ENCODE measurements at regions of chr22 and their contacts with region 1.

Region 1: DNA sequence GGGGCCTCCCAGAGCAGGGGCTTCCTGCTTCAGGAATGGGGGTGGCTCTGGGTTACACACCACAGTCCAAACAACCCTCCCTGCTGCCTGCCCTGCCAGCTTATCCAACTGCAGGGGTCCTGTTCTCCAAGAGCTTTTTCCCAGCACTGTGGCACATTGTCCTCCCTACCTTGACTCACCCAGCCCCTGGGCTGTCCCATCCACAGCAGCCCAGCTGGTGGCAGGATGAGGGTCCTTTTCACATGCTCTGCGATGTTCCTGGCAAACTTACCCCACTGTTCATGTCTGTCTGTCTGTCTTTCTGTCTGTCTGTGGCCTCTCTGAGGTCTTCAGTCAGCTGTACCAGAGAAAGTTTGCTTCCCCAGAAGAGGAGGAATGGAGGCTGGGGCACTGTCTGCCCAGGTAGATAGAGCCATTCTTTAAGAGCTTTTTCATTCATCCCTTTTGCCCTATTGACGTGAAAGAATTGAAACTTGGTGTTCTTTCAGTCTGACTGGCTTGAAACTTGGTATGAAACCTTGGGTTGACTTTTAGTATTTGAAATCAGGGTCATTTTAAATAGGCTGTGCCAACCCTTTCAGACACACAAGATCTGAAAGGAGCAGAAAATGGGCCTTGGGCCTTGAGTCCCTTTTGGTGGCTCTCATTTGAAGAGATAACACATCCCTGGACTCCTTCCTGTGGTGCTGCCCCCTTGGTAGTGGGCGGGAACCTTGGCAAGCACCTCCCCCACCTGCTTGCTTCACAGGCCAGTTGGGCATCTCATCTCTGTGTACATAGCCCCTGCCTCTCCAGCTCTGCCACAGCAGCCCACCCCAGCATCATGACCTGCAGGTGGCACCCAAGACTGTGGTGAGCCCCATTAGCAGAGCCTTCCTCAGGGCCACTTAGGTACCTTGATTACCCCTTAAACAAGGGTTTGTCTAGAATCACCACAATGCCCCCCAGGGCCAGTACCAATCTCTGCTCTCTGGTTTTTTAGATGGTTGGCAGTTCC is 74.6 kb upstream of the SUSD2 start:
- DNase-seq: no peak
- H3K4me3 ChIP-seq: no peak overlapping the region
- H3K27ac ChIP-seq: no peak overlapping the region
- H3K4me1 ChIP-seq: no peaks in the 10 kb centered on the region
- H3K27me3 ChIP-seq: no peaks in the 10 kb centered on the region
- CTCF ChIP-seq: no peak

Region 2: DNA sequence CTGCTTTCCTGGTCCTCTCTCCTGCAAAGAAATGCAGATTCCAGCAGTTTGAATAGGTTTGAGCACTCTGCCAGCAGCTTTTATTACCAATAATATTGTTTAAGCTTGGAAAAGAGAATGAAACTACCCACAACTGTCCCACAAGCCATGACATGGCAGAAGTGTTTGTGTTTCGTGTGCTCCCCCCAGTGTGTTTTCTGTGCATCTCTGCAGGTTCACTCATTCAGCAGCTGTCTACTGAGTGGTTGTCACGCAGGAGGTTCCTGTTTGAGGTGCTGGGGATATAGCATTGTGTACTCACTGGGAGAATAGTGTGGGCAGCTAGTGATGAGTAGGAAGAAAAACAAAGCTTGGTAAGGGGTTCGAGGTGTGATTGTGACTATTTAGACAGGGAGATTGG is 19.3 kb after region 1 on chr22:
- CTCF ChIA-PET with region 1: no interaction called
- dilution Hi-C with region 1: no loop called
- in situ Hi-C with region 1: no loop called
- intact Hi-C with region 1: no loop called
- DNase-seq: no peak
- H3K4me3 ChIP-seq: no peak overlapping the region
- H3K27ac ChIP-seq: no peak overlapping the region
- H3K4me1 ChIP-seq: no peaks in the 10 kb centered on the region
- H3K27me3 ChIP-seq: no peaks in the 10 kb centered on the region
- CTCF ChIP-seq: no peak

Region 3: GRCh38 chr22:24137595-24137994 is 30.9 kb after region 1 on chr22:
- CTCF ChIA-PET with region 1: no interaction called
- dilution Hi-C with region 1: no loop called
- in situ Hi-C with region 1: no loop called
- intact Hi-C with region 1: no loop called
- DNase-seq: no peak
- H3K4me3 ChIP-seq: no peak overlapping the region
- H3K27ac ChIP-seq: no peak overlapping the region
- H3K4me1 ChIP-seq: peaks cover 13% of the 10 kb centered on the region
- H3K27me3 ChIP-seq: no peaks in the 10 kb centered on the region
- CTCF ChIP-seq: no peak

Region 4: DNA sequence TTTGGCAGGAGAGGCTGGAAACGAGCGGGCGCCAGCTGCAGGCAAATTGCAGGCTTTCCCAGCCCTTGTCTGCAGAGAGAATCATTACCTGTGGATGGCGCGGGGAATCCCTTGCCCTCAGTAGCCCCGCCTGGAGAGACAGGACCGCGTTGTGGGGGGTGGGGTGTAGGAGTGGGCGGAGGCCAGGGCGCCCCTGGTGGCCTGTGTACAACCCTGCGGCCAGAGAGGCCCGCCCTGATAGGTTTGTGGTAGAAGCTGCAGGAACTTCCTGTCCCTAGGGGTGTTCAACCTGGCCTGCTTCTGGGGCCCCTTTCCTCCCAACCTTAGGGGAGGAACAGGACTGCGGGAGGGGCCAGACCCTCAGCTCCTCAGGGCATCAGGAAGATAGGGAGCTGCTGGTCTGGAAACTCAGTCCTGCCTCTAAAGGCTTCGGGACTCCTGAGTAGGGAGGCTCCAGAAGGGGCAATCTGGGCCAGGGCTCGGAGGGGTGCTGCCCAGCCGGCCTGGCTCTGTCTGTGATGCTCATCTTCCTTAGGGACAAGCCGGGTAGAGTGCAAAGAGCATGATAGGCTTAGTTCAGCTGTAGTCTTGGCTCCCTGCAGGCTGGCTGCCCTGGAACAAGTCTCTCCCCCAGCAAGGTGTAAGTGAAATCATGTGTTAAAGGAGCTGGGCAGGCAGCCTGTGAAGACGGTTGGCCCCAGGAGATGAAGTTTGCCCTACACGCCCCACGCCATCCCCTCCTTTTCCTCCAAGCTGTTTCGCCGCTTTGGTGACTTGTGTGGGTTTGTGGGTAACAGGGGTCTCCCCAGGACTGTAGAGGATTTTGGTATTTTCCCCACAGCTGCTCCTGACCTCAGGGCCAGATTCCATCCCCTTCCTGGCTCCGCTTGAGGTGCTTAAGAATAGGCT is 50.5 kb after region 1 on chr22:
- CTCF ChIA-PET with region 1: no interaction called
- dilution Hi-C with region 1: no loop called
- in situ Hi-C with region 1: no loop called
- intact Hi-C with region 1: loop called (anchors 5 kb)
- DNase-seq: peak; percentile 74
- H3K4me3 ChIP-seq: peak overlapping the region in 2 of 3 experiments; percentile 34 to 50
- H3K27ac ChIP-seq: no peak overlapping the region
- H3K4me1 ChIP-seq: peaks cover 30% of the 10 kb centered on the region
- H3K27me3 ChIP-seq: no peaks in the 10 kb centered on the region
- CTCF ChIP-seq: peak; percentile 76 to 81

Region 5: DNA sequence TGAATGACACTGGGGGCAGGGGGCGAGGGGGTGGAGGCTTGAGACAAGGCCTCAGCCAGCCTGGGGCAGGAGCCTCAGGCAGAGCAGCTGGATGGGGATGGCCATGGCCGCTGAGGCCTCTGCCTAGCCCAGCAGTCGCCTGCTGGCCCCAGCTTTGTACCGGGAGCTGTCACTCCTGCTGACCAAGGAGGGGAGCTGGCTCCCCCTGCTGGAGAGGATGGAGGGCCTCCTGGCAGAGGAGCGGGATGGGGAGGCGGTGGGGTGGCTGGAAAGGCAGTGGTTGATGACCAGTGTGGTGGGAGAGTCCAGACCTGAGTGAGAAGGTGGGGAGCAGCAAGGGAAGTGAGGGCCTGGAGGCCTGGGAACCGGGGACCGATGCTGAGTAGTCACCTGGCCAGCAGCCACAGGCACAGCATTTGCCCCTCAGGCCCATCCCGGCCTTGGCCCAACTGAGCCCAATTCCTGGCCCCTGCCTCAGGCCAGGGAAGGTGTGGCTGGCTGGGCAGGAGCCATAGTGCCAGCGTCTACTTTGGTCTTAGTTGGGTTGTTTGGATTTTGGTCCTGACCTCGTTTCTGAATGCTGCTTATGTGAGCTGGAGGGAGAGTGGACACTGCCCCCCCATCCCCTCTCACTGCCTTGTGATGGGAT is 68.6 kb after region 1 on chr22:
- CTCF ChIA-PET with region 1: interaction called, 6 read pairs
- dilution Hi-C with region 1: no loop called
- in situ Hi-C with region 1: no loop called
- intact Hi-C with region 1: loop called (anchors 5 kb)
- DNase-seq: peak; percentile 45
- H3K4me3 ChIP-seq: no peak overlapping the region
- H3K27ac ChIP-seq: no peak overlapping the region
- H3K4me1 ChIP-seq: no peaks in the 10 kb centered on the region
- H3K27me3 ChIP-seq: no peaks in the 10 kb centered on the region
- CTCF ChIP-seq: peak; percentile 74 to 88

Region 6: DNA sequence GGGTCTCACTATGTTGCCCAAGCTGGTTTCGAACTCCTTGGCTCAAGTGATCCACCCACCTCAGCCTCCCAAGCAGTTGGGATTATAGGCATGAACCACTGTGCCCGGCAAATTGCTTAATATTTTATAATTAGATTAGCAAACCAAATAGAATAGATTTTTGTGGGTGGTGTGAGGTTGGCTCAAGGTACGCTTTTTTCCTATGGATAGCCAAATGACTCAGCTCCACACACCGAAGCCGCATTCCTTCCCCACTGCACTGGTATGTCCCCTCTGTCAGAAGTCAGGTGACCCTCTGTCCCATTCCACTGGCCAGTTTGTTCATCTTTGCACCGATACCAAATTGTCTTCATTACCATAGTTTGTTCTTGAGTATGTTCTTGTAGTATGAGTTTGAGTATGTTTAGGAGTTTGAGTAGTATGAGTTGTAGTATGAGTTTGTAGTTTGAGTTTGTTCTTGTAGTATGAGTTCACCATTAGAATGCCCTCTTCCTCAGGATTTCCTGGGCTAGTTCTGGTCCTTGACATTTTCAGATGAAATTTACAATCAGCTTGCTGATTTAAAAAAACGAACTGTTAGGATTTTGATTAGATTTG is 94.0 kb after region 1 on chr22:
- CTCF ChIA-PET with region 1: no interaction called
- dilution Hi-C with region 1: no loop called
- in situ Hi-C with region 1: no loop called
- intact Hi-C with region 1: no loop called
- DNase-seq: peak; percentile 74
- H3K4me3 ChIP-seq: no peak overlapping the region
- H3K27ac ChIP-seq: peak overlapping the region; percentile 78
- H3K4me1 ChIP-seq: peaks cover 29% of the 10 kb centered on the region
- H3K27me3 ChIP-seq: no peaks in the 10 kb centered on the region
- CTCF ChIP-seq: no peak

Region 7: DNA sequence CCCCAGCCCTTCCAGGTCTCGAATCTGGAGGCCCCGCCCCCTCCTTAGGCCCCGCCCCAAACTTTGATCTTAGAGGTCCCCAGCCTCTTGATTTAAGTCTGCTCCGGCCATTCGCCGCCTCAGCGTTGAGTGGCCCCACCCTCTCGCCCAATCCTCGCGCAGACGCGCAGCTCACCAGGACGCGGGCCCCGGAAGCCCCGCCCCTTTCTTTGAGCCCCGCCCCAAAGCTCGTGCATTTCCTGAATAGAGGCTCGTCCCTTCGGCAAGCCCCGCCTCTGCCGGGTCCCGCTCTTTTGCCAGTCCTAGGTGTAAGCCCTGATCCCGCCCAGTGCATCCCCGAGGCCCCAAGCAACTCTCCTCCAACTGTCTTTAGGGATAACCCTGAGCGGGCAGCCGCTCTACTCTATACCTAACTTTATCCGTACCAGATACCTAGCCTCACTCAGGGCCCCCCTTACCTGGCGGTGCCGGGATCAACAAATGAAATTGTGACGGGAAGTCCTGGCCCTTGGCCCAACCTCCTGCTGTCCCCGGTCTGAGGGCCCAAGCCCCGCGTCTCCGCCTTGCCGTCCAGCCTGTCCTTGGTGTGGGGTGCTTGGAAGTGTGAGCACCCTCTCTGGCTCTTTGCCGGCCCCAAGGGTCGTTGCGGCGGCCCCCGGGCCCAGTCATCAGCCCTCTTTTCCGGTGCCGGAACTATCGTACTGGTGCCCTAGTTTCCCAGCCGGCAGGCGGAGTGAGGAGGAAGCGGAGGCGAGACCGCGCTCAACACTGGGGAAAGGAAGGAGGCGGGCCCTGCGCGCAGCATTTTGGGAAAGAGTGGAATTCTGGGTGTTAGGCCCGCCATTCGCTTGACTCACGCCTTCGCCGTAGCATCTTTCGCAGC is 448.7 kb after region 1 on chr22 and contains the start of gene SNRPD3:
- CTCF ChIA-PET with region 1: interaction called, 15 read pairs
- dilution Hi-C with region 1: no loop called
- in situ Hi-C with region 1: no loop called
- intact Hi-C with region 1: no loop called
- DNase-seq: peak; percentile 98
- H3K4me3 ChIP-seq: peak within 1 kb of the TSS; percentile 87 to 97 (median 94)
- H3K27ac ChIP-seq: peak within 1 kb of the TSS; percentile 90
- H3K4me1 ChIP-seq: peaks cover 24% of the 10 kb centered on the region
- H3K27me3 ChIP-seq: no peaks in the 10 kb centered on the region
- CTCF ChIP-seq: peak in 1 of 2 donors; percentile 41
- total RNA-seq, gene SNRPD3: 74.8 to 99.7 TPM

Measured in mammary epithelial cell (primary cell).